ENCODE measurements at regions of chr5 and their contacts with region 1.

Region 1: DNA sequence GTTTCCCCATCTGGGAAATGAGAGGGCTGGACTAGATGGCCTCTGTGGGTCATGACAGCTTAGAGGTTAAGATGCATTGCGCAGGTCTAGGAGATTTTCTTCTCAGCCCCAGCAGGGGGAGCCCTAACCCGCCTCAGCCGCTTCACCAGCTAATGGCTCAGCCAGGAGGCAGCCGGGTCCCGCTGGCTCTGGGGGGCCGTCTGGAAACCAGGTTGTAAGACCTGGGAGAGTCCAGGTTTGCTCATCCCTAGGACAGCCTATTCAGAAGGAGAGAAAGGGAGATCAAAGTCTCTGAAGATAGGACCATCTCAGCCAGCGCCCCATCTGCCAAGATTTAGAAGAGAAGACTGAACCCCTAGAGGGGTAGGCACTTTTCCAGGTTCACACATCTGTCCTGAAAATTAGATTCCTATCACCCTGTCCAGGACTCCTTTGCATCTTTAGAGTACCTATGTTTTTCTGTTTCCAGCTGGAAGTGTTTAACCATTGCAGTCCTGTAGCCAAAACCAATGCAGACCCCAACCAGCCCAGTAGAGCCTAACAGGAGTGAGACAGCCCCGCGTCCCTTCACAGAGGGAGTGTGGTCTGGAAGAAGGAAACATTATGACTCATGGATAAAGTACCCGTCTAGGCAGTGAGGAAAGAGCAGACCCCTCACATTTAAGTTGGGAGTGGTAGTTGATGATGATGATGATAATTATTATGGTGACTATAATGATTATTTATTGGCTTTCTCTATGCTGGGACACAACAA is 27.5 kb downstream of the SPARC start:
- DNase-seq: peak; percentile 70 to 85 (median 74)
- H3K4me3 ChIP-seq: no peak overlapping the region
- H3K27ac ChIP-seq: no peak overlapping the region
- H3K4me1 ChIP-seq: peaks cover 0 to 17% (median 15%) of the 10 kb centered on the region in 4 experiments
- H3K27me3 ChIP-seq: no peaks in the 10 kb centered on the region

Region 2: DNA sequence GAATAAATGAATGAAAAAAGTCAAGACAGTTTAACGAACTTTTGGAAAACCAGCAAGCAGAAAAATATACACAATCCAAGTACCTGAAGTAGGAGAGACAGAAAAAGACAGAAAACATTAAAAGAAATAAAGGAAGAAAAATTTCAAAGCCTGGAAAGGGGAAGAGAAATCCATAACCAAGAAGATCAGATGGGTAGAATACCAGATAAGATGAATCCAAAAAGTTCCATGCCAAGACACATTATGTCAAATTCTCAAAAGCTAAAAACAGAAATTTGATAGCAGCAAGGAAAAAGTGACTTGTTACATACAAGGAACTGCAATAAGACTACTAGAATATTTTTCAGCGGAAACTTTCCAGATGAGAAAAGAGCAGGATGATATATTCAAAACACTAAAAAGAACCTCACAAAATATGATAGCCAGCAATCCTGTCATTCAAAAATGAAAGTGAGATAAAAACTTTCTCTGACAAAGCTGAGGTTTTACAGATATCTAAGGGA is 746.8 kb before region 1 on chr5:
- CTCF ChIA-PET with region 1: no interaction called
- POLR2A ChIA-PET with region 1: no interaction called
- DNase-seq: no peak
- H3K4me3 ChIP-seq: no peak overlapping the region
- H3K27ac ChIP-seq: no peak overlapping the region
- H3K4me1 ChIP-seq: no peaks in the 10 kb centered on the region
- H3K27me3 ChIP-seq: no peaks in the 10 kb centered on the region

Region 3: GRCh38 chr5:151675611-151676313 is 16.6 kb after region 1 on chr5:
- CTCF ChIA-PET with region 1: interaction called, 86 read pairs
- POLR2A ChIA-PET with region 1: interaction called, 3 read pairs
- DNase-seq: peak in 2 of 3 donors; percentile 46 to 52
- H3K4me3 ChIP-seq: no peak overlapping the region
- H3K27ac ChIP-seq: no peak overlapping the region
- H3K4me1 ChIP-seq: peaks cover 12 to 41% (median 38%) of the 10 kb centered on the region in 4 experiments
- H3K27me3 ChIP-seq: no peaks in the 10 kb centered on the region

Region 4: DNA sequence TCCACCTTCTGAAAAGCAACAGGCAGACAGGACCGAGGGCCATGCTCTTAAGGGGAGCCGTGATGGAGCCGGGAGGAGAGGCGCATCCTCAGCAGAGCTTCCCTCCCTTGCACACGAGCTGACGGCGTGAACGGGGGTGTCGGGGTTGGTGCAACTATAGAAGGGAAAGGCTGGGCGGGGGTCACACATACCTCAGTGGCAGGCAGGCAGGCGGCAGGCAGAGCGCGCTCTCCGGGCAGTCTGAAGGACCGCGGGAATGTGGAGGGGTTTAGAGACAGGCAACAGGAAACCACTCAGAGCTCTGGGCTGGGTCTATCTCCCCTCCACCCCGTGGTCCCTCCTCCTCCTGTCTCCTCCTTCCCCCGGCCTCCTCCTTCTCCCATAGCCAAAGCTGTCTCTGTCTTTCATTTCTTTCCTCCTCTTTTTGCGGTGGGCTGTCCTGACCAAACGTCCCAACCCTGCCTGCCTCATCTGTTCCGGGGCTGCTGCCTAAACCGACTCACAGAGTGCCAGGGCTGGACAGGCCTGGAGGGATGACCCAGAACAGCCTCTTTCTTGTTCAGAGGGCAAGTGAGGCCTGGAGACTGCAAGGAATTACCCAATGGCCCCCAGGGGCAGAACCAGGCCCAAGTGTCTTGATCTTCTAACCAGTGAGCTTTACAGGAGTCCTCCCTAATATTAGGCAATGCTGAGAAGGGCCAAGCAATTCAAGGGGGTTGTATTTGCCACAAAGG is 27.7 kb after region 1 on chr5 and contains the start of gene SPARC:
- CTCF ChIA-PET with region 1: interaction called, 14 read pairs
- POLR2A ChIA-PET with region 1: no interaction called
- DNase-seq: peak; percentile 21 to 47 (median 40)
- H3K4me3 ChIP-seq: peak within 1 kb of the TSS; percentile 25 to 78 (median 63)
- H3K27ac ChIP-seq: no peak within 1 kb of the TSS
- H3K4me1 ChIP-seq: peaks cover 0 to 51% (median 42%) of the 10 kb centered on the region in 4 experiments
- H3K27me3 ChIP-seq: no peaks in the 10 kb centered on the region

Region 5: DNA sequence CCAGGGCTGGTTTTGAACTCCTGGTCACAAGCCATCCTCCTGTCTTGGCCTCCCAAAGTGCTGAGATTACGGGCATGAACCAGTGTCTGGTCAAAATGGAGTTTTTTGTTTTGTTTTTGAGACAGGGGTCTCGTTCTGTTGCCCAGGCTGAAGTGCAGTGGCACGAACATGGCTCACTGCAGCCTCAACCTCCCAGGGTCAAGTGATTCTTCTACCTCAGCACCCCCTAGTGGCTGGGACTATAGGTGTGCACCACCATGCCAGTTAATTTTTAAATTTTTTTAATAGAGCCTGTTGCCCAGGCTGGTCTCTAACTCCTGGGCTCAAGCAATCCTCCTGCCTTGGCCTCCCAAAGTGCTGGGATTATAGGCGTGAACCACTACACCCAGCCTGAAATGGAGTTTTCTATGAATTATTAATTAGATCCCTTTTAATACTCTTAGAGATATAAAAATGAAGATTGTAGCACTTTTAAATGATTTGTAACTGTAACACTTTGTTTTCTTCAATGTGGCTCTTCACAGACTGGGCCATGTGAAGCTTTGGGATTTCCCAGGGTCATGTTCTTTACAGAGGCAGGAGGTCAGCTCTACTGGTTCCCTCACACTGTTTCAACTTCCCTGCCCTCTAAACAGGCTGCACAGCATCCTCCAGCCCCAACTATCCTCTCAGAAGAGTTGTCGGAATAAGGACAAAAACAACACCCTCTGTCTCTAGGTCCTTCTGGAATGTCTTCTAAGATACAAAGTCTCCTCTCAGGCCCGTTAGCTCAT is 60.2 kb after region 1 on chr5:
- CTCF ChIA-PET with region 1: interaction called, 113 read pairs
- POLR2A ChIA-PET with region 1: no interaction called
- DNase-seq: peak; percentile 19 to 50 (median 39)
- H3K4me3 ChIP-seq: no peak overlapping the region
- H3K27ac ChIP-seq: no peak overlapping the region
- H3K4me1 ChIP-seq: peaks cover 6 to 18% (median 10%) of the 10 kb centered on the region in 4 experiments
- H3K27me3 ChIP-seq: no peaks in the 10 kb centered on the region

Region 6: DNA sequence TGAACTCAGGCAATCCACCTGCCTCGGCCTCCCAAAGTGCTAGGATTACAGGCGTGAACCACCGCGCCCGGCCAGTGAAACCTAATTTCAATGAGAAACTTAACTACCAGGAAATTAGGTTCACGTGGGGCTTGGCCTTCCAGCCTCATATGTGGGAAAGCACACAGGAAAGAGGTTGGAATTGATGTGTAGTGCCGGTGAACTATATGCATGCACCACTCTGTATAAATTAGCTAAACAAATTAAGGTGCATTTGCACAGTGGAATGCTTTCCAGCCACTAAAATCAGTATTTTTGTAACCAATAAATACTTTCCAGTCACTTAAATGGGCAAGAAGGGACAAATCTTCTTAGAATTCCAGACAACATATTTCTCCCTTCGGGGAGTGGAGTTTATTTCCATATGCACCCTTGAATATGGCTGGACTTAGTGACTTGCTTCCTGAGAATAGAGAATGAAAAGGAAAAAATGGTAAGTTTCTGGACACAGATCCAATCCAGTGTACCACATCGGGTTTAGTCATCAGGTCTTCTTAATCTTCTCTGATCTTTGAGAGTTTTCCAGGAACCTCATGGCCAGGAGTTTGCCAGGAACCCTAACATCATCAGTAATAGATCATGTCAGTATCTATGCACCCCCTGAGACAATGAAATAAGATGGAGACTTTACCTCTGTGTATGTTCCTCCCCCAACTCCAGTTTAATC is 74.3 kb after region 1 on chr5:
- CTCF ChIA-PET with region 1: interaction called, 173 read pairs
- POLR2A ChIA-PET with region 1: no interaction called
- DNase-seq: no peak
- H3K4me3 ChIP-seq: no peak overlapping the region
- H3K27ac ChIP-seq: no peak overlapping the region
- H3K4me1 ChIP-seq: no peaks in the 10 kb centered on the region
- H3K27me3 ChIP-seq: no peaks in the 10 kb centered on the region

Region 7: DNA sequence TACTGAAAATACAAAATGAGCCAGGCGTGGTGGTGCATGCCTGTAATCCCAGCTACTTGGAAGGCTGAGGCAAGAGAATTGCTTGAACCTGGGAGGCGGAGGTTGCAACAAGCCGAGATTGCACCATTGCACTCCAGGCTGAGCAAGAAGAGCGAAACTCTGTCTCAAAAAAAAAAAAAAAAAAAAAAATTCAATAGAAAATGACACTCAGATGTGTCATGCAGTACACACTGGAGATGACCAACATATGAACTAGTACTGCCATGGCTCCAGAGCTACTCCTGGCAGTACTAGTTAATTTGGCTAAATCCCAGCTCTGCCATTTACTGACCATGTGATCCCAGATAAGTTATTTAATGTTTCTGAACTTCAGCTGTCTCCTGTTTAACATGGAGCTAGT is 91.9 kb after region 1 on chr5:
- CTCF ChIA-PET with region 1: interaction called, 12 read pairs
- POLR2A ChIA-PET with region 1: no interaction called
- DNase-seq: no peak
- H3K4me3 ChIP-seq: no peak overlapping the region
- H3K27ac ChIP-seq: no peak overlapping the region
- H3K4me1 ChIP-seq: peaks cover 4 to 14% (median 7%) of the 10 kb centered on the region in 4 experiments
- H3K27me3 ChIP-seq: no peaks in the 10 kb centered on the region